ENCODE measurements at regions of chr12 and their contacts with region 1.

Region 1: GRCh38 chr12:57452937-57453509 is 2.1 kb upstream of the INHBE start:
- DNase-seq: peak; percentile 78
- H3K4me3 Mint-ChIP-seq: no peak overlapping the region
- H3K27ac Mint-ChIP-seq: no peak overlapping the region
- H3K4me1 Mint-ChIP-seq: peaks cover 29% of the 10 kb centered on the region
- H3K27me3 Mint-ChIP-seq: no peaks in the 10 kb centered on the region
- CTCF ChIP-seq: peak; percentile 88

Region 2: GRCh38 chr12:57261428-57261865 is 191.6 kb before region 1 on chr12:
- CTCF ChIA-PET with region 1: interaction called, 139 read pairs
- POLR2A ChIA-PET with region 1: no interaction called
- intact Hi-C with region 1: loop called (anchors 1 kb)
- DNase-seq: no peak
- H3K4me3 Mint-ChIP-seq: no peak overlapping the region
- H3K27ac Mint-ChIP-seq: no peak overlapping the region
- H3K4me1 Mint-ChIP-seq: no peaks in the 10 kb centered on the region
- H3K27me3 Mint-ChIP-seq: no peaks in the 10 kb centered on the region
- CTCF ChIP-seq: no peak

Region 3: DNA sequence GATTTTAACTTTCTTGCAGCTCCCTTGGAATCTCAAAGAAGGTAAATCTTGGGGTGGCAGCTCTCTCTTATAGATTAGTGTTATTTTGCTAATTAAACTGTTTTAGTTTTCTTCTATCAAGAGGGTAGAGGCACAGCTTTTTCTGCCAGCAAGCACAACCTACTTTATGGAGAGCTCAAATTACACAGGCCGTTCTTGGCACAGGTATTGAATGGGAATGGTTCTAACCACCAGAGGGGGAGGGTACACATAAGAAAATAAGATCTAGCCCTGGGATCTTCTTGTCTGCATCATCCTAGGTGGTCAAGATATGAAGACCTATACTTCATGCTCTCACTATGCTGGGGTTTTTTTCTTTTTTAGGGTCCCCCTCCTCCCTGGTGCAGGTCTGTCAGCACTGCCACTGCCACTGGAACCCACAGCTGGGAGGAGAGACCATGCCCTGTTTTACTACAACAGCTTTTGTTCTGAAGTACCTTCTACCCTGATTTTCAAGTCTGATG is 153.5 kb before region 1 on chr12:
- CTCF ChIA-PET with region 1: interaction called, 63 read pairs
- POLR2A ChIA-PET with region 1: interaction called, 4 read pairs
- intact Hi-C with region 1: no loop called
- DNase-seq: peak; percentile 32
- H3K4me3 Mint-ChIP-seq: no peak overlapping the region
- H3K27ac Mint-ChIP-seq: no peak overlapping the region
- H3K4me1 Mint-ChIP-seq: no peaks in the 10 kb centered on the region
- H3K27me3 Mint-ChIP-seq: no peaks in the 10 kb centered on the region
- CTCF ChIP-seq: no peak

Region 4: GRCh38 chr12:57340104-57340503 is 112.9 kb before region 1 on chr12:
- CTCF ChIA-PET with region 1: interaction called, 19 read pairs
- POLR2A ChIA-PET with region 1: interaction called, 4 read pairs
- intact Hi-C with region 1: no loop called
- DNase-seq: no peak
- H3K4me3 Mint-ChIP-seq: no peak overlapping the region
- H3K27ac Mint-ChIP-seq: no peak overlapping the region
- H3K4me1 Mint-ChIP-seq: peaks cover 6% of the 10 kb centered on the region
- H3K27me3 Mint-ChIP-seq: no peaks in the 10 kb centered on the region
- CTCF ChIP-seq: no peak

Region 5: DNA sequence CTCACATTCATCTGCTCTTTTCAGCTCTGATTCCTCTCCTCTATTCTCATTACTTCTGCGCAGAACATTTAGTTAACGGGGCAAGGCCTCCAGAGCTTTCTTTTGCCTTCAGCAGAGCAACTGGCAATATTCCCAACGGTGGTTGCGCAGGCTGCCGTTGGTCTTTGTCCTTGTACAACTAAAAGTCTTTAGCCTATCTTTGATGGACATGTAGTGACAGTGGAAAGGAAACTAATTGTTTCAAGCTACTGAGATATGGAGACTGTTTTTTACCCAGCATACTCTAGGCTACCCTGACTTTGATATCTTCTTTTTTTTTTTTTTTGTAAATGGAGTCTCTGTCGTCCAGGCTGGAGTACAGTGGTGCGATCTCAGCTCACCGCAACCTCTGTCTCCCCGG is 34.8 kb before region 1 on chr12:
- CTCF ChIA-PET with region 1: interaction called, 11 read pairs
- POLR2A ChIA-PET with region 1: no interaction called
- intact Hi-C with region 1: no loop called
- DNase-seq: no peak
- H3K4me3 Mint-ChIP-seq: no peak overlapping the region
- H3K27ac Mint-ChIP-seq: no peak overlapping the region
- H3K4me1 Mint-ChIP-seq: peaks cover 27% of the 10 kb centered on the region
- H3K27me3 Mint-ChIP-seq: no peaks in the 10 kb centered on the region
- CTCF ChIP-seq: no peak

Region 6: GRCh38 chr12:57475271-57476161 is 22.5 kb after region 1 on chr12:
- CTCF ChIA-PET with region 1: interaction called, 31 read pairs
- POLR2A ChIA-PET with region 1: no interaction called
- intact Hi-C with region 1: no loop called
- DNase-seq: no peak
- H3K4me3 Mint-ChIP-seq: peak overlapping the region; percentile 31
- H3K27ac Mint-ChIP-seq: no peak overlapping the region
- H3K4me1 Mint-ChIP-seq: peaks cover 7% of the 10 kb centered on the region
- H3K27me3 Mint-ChIP-seq: peaks cover 87% of the 10 kb centered on the region
- CTCF ChIP-seq: no peak

Region 7: DNA sequence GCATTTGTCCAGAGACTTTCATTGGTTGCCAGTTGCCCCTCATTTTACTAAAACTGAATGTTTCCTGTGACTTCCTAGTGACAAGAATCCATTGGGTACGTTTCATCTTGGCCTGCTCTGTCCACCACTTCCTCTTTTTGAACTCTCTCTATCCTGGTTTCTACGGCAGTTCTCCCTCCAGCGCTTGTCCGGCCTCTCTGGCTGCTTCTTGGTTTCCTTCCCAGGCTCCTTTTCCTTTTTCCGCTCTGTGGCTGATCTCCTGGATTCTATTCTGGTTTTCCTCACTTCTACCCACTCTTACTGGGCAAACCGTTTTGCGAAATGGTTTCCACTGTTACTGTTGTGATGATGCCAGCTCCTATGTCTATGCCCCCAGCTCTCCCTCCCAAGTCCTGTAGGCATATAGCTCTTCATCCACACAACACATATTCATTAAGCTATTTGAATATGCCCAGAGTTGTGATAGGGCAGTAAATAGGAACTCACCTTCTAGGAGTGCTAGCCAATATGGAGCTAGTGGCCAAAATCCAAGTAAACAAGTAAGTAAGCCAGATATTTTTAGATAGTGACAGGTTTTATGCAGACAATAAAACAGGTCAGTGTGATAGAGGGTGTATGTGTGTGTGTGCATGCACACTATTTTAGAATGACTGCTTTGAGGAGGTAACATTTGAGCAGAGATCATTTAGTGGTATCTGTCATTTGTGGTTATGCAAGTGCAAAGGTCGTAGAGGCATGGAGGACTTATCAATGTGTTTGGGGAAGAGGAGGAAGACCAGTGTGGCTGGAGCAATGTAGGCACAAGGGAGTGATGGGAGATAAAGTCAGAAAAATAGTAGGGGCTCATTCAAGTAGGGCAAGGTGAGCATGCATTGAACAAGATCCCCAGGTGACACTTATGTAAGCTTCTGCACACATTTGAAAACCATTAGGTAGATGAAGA is 421.4 kb after region 1 on chr12:
- CTCF ChIA-PET with region 1: no interaction called
- POLR2A ChIA-PET with region 1: no interaction called
- intact Hi-C with region 1: no loop called
- DNase-seq: no peak
- H3K4me3 Mint-ChIP-seq: no peak overlapping the region
- H3K27ac Mint-ChIP-seq: no peak overlapping the region
- H3K4me1 Mint-ChIP-seq: no peaks in the 10 kb centered on the region
- H3K27me3 Mint-ChIP-seq: no peaks in the 10 kb centered on the region
- CTCF ChIP-seq: no peak